ENCODE measurements at regions of chr19 and their contacts with region 1.

Region 1: DNA sequence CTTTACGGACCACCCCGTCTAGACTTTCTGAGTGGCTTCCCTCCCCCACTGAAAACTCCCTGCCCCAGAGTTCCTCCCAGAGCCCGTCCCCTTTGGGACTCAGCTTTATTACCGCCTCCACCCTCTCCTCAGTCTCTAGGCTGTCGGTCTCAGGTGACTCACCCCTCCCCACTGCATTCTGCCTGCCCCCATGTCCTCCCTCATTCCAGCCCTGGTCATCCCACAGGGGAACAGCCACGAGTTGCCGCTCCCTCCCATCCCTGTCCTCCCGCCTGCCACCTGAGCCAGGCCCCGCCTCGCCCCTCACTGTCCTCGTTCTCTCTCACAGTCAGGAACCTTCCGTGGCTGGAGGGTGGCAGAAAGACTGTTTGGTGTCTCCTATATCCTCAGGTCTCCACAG is 57.3 kb downstream of the SMARCA4 start:
- DNase-seq: peak in 1 of 2 donors; percentile 67
- H3K4me3 ChIP-seq: no peak overlapping the region
- H3K27ac ChIP-seq: no peak overlapping the region
- H3K4me1 ChIP-seq: no peaks in the 10 kb centered on the region
- H3K27me3 ChIP-seq: no peaks in the 10 kb centered on the region
- CTCF ChIP-seq: no peak
- EP300 ChIP-seq: no peak
- POLR2A ChIP-seq: no peak

Region 2: GRCh38 chr19:11227201-11227886 is 209.2 kb after region 1 on chr19:
- intact Hi-C with region 1: loop called (anchors 10 kb)
- DNase-seq: no peak
- H3K4me3 ChIP-seq: no peak overlapping the region
- H3K27ac ChIP-seq: no peak overlapping the region
- H3K4me1 ChIP-seq: no peaks in the 10 kb centered on the region
- H3K27me3 ChIP-seq: no peaks in the 10 kb centered on the region
- CTCF ChIP-seq: no peak
- EP300 ChIP-seq: no peak
- POLR2A ChIP-seq: no peak